Calu3 (cell line): ENCODE measurements at regions of chr6 and their contacts with region 1.

Region 1: GRCh38 chr6:116287689-116288282 is 8.1 kb upstream of the TSPYL1 start:
- DNase-seq: no peak
- H3K4me3 Mint-ChIP-seq: no peak overlapping the region
- H3K27ac Mint-ChIP-seq: no peak overlapping the region
- H3K4me1 Mint-ChIP-seq: no peaks in the 10 kb centered on the region
- H3K27me3 Mint-ChIP-seq: no peaks in the 10 kb centered on the region
- CTCF ChIP-seq: peak; percentile 58

Region 2: GRCh38 chr6:116363759-116364158 is 76.0 kb after region 1 on chr6:
- CTCF ChIA-PET with region 1: no interaction called
- intact Hi-C with region 1: no loop called
- DNase-seq: no peak
- H3K4me3 Mint-ChIP-seq: no peak overlapping the region
- H3K27ac Mint-ChIP-seq: peak overlapping the region; percentile 14
- H3K4me1 Mint-ChIP-seq: peaks cover 8% of the 10 kb centered on the region
- H3K27me3 Mint-ChIP-seq: no peaks in the 10 kb centered on the region
- CTCF ChIP-seq: no peak

Region 3: DNA sequence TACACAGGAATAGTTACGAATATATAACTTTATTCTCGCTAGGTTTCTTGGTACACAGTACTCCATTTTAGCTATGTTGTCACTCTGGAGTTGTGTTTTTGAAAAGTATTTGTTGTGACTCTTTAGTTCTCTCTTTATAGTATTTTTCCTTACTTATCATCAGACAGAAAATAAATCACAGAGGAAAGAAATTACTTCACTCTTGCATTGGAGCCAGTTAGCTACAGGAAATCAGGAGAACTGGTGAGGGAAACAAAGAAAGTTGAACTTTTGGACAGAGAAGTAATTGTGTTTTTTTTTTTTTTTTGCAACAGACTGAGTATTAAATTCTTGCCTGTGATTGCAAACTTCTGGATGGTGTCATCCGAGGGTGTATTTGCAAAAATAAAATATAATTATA is 116.9 kb after region 1 on chr6:
- CTCF ChIA-PET with region 1: interaction called, 3 read pairs
- intact Hi-C with region 1: loop called (anchors 5 kb)
- DNase-seq: no peak
- H3K4me3 Mint-ChIP-seq: no peak overlapping the region
- H3K27ac Mint-ChIP-seq: no peak overlapping the region
- H3K4me1 Mint-ChIP-seq: peaks cover 9% of the 10 kb centered on the region
- H3K27me3 Mint-ChIP-seq: no peaks in the 10 kb centered on the region
- CTCF ChIP-seq: no peak

Region 4: GRCh38 chr6:116444092-116444491 is 156.3 kb after region 1 on chr6:
- CTCF ChIA-PET with region 1: interaction called, 9 read pairs
- intact Hi-C with region 1: loop called (anchors 1 kb)
- DNase-seq: peak; percentile 22
- H3K4me3 Mint-ChIP-seq: no peak overlapping the region
- H3K27ac Mint-ChIP-seq: peak overlapping the region; percentile 28
- H3K4me1 Mint-ChIP-seq: peaks cover 33% of the 10 kb centered on the region
- H3K27me3 Mint-ChIP-seq: no peaks in the 10 kb centered on the region
- CTCF ChIP-seq: no peak

Region 5: DNA sequence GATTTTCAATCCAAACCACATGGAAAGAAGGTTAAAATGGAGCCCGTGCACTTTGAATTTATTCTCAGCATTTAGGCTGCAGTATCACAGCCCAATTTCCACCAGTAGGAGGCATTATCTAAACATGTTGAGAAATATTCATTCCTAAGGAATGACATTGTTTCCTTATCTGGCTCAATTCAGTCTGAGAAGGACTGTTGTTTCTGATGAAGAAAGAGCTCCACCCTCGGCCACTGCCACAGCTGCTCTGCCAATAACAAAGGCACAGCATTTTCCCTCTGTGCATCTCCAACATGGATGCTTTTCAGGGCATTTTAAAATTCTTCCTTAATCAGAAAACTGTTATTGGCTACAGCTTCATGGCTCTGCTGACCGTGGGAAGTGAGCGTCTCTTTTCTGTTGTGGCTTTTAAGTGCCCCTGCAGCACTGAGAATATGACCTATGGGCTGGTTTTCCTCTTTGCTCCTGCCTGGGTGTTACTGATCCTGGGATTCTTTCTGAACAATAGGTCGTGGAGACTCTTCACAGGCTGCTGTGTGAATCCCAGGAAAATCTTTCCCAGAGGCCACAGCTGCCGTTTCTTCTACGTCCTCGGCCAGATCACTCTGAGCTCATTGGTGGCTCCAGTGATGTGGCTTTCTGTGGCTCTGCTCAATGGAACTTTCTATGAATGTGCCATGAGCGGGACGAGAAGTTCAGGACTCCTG is 223.8 kb after region 1 on chr6 and contains the start of gene CALHM5:
- CTCF ChIA-PET with region 1: interaction called, 12 read pairs
- intact Hi-C with region 1: loop called (anchors 5 kb)
- DNase-seq: peak; percentile 67
- H3K4me3 Mint-ChIP-seq: no peak within 1 kb of the TSS
- H3K27ac Mint-ChIP-seq: no peak within 1 kb of the TSS
- H3K4me1 Mint-ChIP-seq: peaks cover 8% of the 10 kb centered on the region
- H3K27me3 Mint-ChIP-seq: peaks cover 17% of the 10 kb centered on the region
- CTCF ChIP-seq: no peak
- total RNA-seq, gene CALHM5: 0.05 TPM in 1 of 2 replicates, not detected in the other

Region 6: DNA sequence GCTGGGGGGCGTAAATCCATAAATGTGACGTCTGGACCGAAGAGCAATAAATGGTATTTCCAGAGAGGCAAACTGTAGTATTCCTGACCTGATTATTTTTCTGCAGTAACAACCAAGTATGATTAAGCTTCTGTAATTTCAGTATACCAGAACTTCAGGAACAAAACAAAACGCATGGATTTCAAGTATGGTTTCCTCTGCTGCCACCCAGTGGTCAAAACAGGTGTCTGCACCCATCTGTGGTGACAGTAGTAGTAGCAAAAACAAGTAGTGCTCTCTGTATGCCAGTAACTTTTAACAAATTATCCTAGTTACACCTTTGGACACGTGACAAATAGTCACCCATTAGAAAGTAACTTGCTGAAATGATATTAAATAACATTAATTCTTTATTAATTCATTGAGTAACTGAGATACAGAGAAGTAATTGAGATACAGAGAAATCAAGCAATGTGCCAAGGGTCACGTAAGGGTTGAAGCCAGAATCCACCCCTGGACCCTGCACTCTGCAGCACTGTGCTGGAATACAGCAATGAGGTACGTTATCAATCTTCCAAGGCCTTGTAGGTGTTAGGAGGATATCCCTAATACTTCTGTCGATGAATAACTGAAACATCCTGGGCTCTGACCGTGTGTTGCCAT is 273.7 kb after region 1 on chr6:
- CTCF ChIA-PET with region 1: interaction called, 4 read pairs
- intact Hi-C with region 1: loop called (anchors 1 kb)
- DNase-seq: peak; percentile 70
- H3K4me3 Mint-ChIP-seq: no peak overlapping the region
- H3K27ac Mint-ChIP-seq: no peak overlapping the region
- H3K4me1 Mint-ChIP-seq: peaks cover 23% of the 10 kb centered on the region
- H3K27me3 Mint-ChIP-seq: peaks cover 44% of the 10 kb centered on the region
- CTCF ChIP-seq: peak; percentile 78